A549 (cell line): ENCODE measurements at regions of chr4 and their contacts with region 1.

Region 1: DNA sequence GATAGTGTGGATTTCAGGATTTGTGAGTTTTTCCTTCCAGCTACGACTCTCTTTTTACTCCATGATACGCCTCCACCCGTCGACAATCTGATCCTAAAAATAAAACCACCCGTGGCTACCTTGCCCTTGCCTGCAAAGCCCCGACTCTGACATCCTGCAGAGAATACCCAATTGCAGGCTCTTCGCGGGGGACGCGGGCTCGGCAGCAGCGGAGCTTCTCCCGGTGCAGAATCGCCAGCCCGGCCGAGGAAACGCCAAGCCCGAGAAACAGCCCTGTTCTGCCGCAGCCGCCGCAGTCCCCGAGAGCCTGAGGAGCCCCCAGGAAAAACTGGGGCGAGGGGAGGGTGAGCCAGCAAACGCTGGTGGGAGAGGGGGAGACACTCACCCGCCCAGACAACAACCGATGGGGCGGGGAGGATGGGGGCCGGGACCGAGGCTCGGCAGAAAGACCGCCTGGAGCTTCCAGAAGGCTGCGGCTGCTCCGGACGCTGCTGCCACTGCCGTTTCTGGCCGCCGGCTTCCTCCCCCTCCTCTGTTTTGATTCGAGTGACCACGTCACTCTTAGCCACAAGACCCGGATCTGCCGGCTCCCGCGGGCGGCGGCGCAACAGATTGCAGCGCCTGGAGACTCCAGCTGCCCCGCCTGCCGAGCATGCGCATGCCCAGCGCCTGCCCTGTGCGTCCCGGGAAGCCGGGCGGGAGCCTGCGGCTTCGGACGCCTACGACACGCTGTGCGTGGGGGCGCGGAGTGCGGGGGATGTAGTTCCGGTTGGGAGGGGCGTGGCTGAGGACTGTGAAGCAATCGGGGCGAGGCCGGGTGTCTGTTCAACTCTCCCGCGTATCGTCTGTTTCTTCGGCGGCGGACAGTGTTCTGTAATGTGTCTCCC is at the start of gene SMIM14:
- DNase-seq: peak; percentile 89 to 97
- ATAC-seq: peak; percentile 91 to 93
- H3K4me3 ChIP-seq: peak within 1 kb of the TSS; percentile 85
- H3K27ac ChIP-seq: peak within 1 kb of the TSS; percentile 96 to 97
- H3K4me1 ChIP-seq: peaks cover 34% of the 10 kb centered on the region
- CTCF ChIP-seq: no peak
- EP300 ChIP-seq: no peak
- POLR2A ChIP-seq: peak; percentile 66
- RAD21 ChIP-seq: peak in 1 of 2 experiments; percentile 15; a peak in 1 of 5 replicates
- polyA plus RNA-seq, gene SMIM14: 81.3 and 109 TPM in 2 replicates

Region 2: DNA sequence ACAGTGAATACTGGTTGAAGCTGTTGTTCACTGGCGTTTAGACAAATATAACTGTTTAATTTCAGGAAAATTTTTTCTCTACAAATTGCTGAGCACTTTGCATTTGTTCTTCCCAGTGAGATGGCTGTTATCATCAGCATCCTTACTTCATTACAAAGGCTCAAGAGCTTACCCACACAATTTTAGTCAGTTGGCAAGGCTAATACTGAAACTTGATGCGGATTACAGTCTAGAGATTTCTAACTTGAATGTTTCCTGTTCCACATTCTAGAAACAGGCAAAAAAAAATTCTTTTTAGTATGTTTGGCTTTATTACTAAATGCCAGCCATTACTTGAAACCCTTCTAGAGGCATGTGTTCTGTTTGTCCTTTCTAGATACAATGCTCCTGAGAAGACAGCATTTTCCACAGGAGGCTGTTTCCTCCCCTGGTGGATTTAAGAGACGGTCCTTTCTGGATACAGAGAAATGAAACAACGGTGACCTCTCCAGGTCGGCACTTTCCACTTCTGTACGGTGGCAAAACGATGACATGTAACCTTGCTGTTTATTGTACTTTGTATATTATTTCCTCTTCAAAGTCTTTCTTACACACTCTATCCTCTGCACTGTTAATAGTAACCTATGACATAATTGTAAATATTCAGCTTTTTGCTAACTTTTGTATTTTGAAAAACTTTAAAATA is 353.3 kb before region 1 on chr4:
- CTCF ChIA-PET with region 1: no interaction called
- POLR2A ChIA-PET with region 1: no interaction called
- DNase-seq: no peak
- ATAC-seq: no peak
- H3K4me3 ChIP-seq: no peak overlapping the region
- H3K27ac ChIP-seq: no peak overlapping the region
- H3K4me1 ChIP-seq: no peaks in the 10 kb centered on the region
- CTCF ChIP-seq: no peak
- EP300 ChIP-seq: no peak
- POLR2A ChIP-seq: no peak
- RAD21 ChIP-seq: no peak

Region 3: GRCh38 chr4:39621582-39621981 is 17.0 kb before region 1 on chr4:
- CTCF ChIA-PET with region 1: interaction called, 3 read pairs
- POLR2A ChIA-PET with region 1: interaction called, 27 read pairs
- DNase-seq: peak in 1 of 2 experiments; percentile 90
- ATAC-seq: peak; percentile 90 to 97
- H3K4me3 ChIP-seq: 0 out of 3 replicates have a peak overlapping the region, but pooled peaks have one; percentile 18
- H3K27ac ChIP-seq: peak overlapping the region; percentile 83 to 91
- H3K4me1 ChIP-seq: peaks cover 65% of the 10 kb centered on the region
- CTCF ChIP-seq: no peak
- EP300 ChIP-seq: no peak; a peak in 1 of 5 replicates
- POLR2A ChIP-seq: no peak
- RAD21 ChIP-seq: no peak